ENCODE measurements at regions of chr16 and their contacts with region 1.

Region 1: DNA sequence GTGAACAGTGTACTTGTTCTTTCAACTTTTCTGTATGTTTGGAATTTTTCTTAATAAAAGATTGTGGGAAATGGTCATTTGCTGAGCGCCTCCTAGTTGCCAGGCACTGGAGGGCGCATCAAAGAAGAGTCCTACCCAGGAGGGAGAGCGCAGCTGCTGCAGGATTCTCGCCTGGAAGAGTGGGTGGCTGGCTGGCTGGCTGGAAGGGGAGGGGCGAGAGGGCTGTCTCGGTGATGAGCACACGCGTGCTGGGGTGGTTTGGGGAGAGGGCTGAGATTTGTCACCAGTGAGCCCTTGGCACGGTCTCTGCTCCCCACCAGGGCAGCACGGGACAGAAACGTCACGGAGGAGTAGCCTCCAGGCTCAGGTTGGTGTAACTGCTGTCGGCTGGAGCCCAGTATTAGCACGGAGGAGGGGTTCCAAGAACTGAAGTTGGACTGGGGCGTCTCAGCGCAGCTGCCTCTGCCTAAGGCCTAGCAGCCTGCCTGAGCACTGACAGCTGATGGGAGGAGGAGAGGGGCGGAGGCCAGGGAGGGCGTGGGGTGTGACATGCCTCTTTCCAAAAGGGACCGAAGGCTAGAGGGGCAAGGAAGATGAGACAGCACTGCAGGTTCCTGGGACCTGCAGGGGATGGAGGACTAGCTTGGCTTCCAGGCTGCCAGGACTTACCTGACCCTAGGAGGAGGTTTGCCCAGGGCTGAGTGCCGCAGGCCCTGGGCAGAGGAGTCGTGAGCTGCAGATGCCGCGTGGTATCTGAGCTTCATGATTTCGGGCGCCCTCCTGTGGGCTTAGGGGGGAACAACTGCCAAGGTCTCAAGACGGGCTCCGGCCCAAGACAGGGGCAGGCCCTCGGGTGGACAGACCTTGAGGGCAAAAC is 5.7 kb downstream of the LDHD start:
- DNase-seq: peak; percentile 90
- H3K4me3 Mint-ChIP-seq: peak overlapping the region; percentile 83
- H3K27ac Mint-ChIP-seq: peak overlapping the region; percentile 85
- H3K4me1 Mint-ChIP-seq: peaks cover 59% of the 10 kb centered on the region
- H3K27me3 Mint-ChIP-seq: peaks cover 7% of the 10 kb centered on the region

Region 2: GRCh38 chr16:74695450-74696422 is 415.1 kb before region 1 on chr16:
- CTCF ChIA-PET with region 1: interaction called, 5 read pairs
- POLR2A ChIA-PET with region 1: no interaction called
- intact Hi-C with region 1: loop called (anchors 2 kb)
- DNase-seq: peak; percentile 75
- H3K4me3 Mint-ChIP-seq: peak overlapping the region; percentile 69
- H3K27ac Mint-ChIP-seq: no peak overlapping the region
- H3K4me1 Mint-ChIP-seq: peaks cover 40% of the 10 kb centered on the region
- H3K27me3 Mint-ChIP-seq: no peaks in the 10 kb centered on the region

Region 3: GRCh38 chr16:74813109-74813641 is 297.7 kb before region 1 on chr16:
- CTCF ChIA-PET with region 1: interaction called, 20 read pairs
- POLR2A ChIA-PET with region 1: no interaction called
- intact Hi-C with region 1: loop called (anchors 1 kb)
- DNase-seq: peak; percentile 81
- H3K4me3 Mint-ChIP-seq: no peak overlapping the region
- H3K27ac Mint-ChIP-seq: no peak overlapping the region
- H3K4me1 Mint-ChIP-seq: no peaks in the 10 kb centered on the region
- H3K27me3 Mint-ChIP-seq: no peaks in the 10 kb centered on the region

Region 4: GRCh38 chr16:74984535-74985296 is 126.2 kb before region 1 on chr16 and contains the start of gene WDR59:
- CTCF ChIA-PET with region 1: interaction called, 70 read pairs
- POLR2A ChIA-PET with region 1: interaction called, 23 read pairs
- intact Hi-C with region 1: loop called (anchors 1 kb)
- DNase-seq: peak; percentile 99
- H3K4me3 Mint-ChIP-seq: peak within 1 kb of the TSS; percentile 86
- H3K27ac Mint-ChIP-seq: peak within 1 kb of the TSS; percentile 74
- H3K4me1 Mint-ChIP-seq: peaks cover 19% of the 10 kb centered on the region
- H3K27me3 Mint-ChIP-seq: no peaks in the 10 kb centered on the region
- total RNA-seq, gene WDR59: 63.5 to 65.7 TPM

Region 5: GRCh38 chr16:75011634-75012307 is 99.1 kb before region 1 on chr16:
- CTCF ChIA-PET with region 1: interaction called, 84 read pairs
- POLR2A ChIA-PET with region 1: interaction called, 15 read pairs
- intact Hi-C with region 1: loop called (anchors 1 kb)
- DNase-seq: peak; percentile 82
- H3K4me3 Mint-ChIP-seq: peak overlapping the region; percentile 58
- H3K27ac Mint-ChIP-seq: peak overlapping the region; percentile 89
- H3K4me1 Mint-ChIP-seq: peaks cover 53% of the 10 kb centered on the region
- H3K27me3 Mint-ChIP-seq: no peaks in the 10 kb centered on the region

Region 6: DNA sequence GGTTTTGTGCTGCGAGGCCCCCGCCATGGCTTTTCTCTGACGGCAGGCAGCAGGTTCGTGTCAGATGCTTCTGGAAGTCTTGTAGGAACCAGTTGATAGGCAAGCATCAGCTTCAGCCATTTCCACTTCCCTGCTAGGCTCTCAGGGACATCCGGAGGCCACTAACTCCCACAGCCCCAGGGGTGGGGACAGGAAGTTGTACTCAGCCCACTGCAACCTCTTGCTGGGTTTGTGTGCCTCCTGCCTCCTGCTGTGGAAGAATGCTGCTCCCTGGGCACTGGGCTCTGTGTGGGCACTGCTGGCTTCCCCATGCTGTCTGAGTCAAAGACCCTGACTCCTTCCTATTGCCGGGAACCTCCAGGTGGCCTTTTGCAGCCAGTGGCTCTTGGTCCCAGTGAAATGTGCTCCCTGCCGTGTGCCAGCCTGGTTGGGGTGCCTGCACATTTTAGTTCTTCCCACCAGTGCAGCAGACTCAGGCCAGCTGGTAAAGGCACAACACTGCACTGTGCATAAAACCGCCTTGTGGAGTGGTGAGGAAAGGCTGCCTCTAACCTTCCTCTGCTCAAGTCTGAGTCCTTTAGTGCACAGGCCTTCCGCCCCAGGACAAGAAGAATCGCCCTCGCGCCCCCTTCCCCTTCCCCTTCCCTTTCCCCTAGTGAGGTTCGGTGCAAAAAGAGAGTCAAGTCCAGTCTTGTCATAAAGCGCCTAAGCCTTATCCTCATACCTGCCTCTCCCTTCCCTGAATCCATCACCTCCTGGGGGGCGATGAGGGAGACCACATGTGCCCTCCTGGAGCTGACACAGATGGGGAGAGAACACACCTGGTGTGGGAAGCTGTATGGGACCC is 10.9 kb before region 1 on chr16:
- CTCF ChIA-PET with region 1: interaction called, 79 read pairs
- POLR2A ChIA-PET with region 1: interaction called, 56 read pairs
- intact Hi-C with region 1: loop called (anchors 1 kb)
- DNase-seq: peak; percentile 76
- H3K4me3 Mint-ChIP-seq: peak overlapping the region; percentile 50
- H3K27ac Mint-ChIP-seq: peak overlapping the region; percentile 92
- H3K4me1 Mint-ChIP-seq: peaks cover 57% of the 10 kb centered on the region
- H3K27me3 Mint-ChIP-seq: no peaks in the 10 kb centered on the region

Measured in activated CD4-positive, alpha-beta memory T cell treated with anti-CD3 and anti-CD28 coated beads for 36 hours (primary cell).